CD8-positive, alpha-beta T cell (primary cell): ENCODE measurements at regions of chr13 and their contacts with region 1.

Region 1: GRCh38 chr13:49278211-49278610 is 30.5 kb downstream of the CDADC1 start:
- DNase-seq: no peak
- ATAC-seq: no peak
- H3K4me3 ChIP-seq: no peak overlapping the region
- H3K4me3 Mint-ChIP-seq: no peak overlapping the region
- H3K27ac ChIP-seq: no peak overlapping the region
- H3K27ac Mint-ChIP-seq: no peak overlapping the region
- H3K4me1 ChIP-seq: no peaks in the 10 kb centered on the region
- H3K4me1 Mint-ChIP-seq: no peaks in the 10 kb centered on the region
- H3K27me3 ChIP-seq: no peaks in the 10 kb centered on the region
- H3K27me3 Mint-ChIP-seq: no peaks in the 10 kb centered on the region
- CTCF ChIP-seq: no peak

Region 2: GRCh38 chr13:48595431-48596429 is 682.5 kb before region 1 on chr13:
- CTCF ChIA-PET with region 1: interaction called, 4 read pairs
- POLR2A ChIA-PET with region 1: no interaction called
- intact Hi-C with region 1: loop called in 1 of 2 experiments (anchors 5 kb)
- DNase-seq: peak; percentile 20 to 83 (median 48)
- ATAC-seq: peak; percentile 81
- H3K4me3 ChIP-seq: no peak overlapping the region
- H3K4me3 Mint-ChIP-seq: no peak overlapping the region
- H3K27ac ChIP-seq: no peak overlapping the region
- H3K27ac Mint-ChIP-seq: no peak overlapping the region
- H3K4me1 ChIP-seq: no peaks in the 10 kb centered on the region
- H3K4me1 Mint-ChIP-seq: no peaks in the 10 kb centered on the region
- H3K27me3 ChIP-seq: no peaks in the 10 kb centered on the region
- H3K27me3 Mint-ChIP-seq: no peaks in the 10 kb centered on the region
- CTCF ChIP-seq: peak; percentile 48

Region 3: GRCh38 chr13:49098771-49099512 is 179.3 kb before region 1 on chr13:
- CTCF ChIA-PET with region 1: interaction called, 3 read pairs
- POLR2A ChIA-PET with region 1: no interaction called
- intact Hi-C with region 1: loop called (anchors 1 to 2 kb)
- DNase-seq: peak in 2 of 9 experiments; percentile 11 to 43
- ATAC-seq: no peak
- H3K4me3 ChIP-seq: no peak overlapping the region
- H3K4me3 Mint-ChIP-seq: no peak overlapping the region
- H3K27ac ChIP-seq: no peak overlapping the region
- H3K27ac Mint-ChIP-seq: no peak overlapping the region
- H3K4me1 ChIP-seq: no peaks in the 10 kb centered on the region
- H3K4me1 Mint-ChIP-seq: peaks cover 8% of the 10 kb centered on the region
- H3K27me3 ChIP-seq: no peaks in the 10 kb centered on the region
- H3K27me3 Mint-ChIP-seq: no peaks in the 10 kb centered on the region
- CTCF ChIP-seq: no peak

Region 4: DNA sequence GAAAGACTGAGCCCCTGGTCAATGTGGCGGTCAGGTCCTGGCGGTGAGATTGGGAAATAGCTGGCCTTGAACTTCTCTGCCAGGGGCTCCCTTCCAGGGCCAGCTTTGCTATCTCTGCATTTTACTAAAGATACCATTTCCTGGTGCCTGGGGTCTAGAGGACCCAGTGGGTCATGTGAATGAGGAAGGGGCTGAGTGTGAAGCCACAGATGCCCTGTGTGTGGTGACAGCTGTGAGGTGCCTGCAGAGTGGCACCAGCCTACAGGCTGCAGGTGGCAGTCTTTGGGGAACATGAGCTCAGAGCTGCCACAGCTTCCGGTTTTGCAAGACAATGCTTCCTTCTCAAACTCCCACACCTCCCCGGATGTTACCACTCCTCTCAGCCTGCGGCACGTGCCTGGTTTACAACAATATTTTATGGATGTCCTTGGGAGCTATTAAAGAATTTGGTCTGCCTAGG is 63.3 kb before region 1 on chr13:
- CTCF ChIA-PET with region 1: interaction called, 6 read pairs
- POLR2A ChIA-PET with region 1: interaction called, 3 read pairs
- intact Hi-C with region 1: loop called in 1 of 2 experiments (anchors 2 kb)
- DNase-seq: peak in 8 of 9 experiments; percentile 11 to 68 (median 45)
- ATAC-seq: peak; percentile 89
- H3K4me3 ChIP-seq: no peak overlapping the region
- H3K4me3 Mint-ChIP-seq: no peak overlapping the region
- H3K27ac ChIP-seq: no peak overlapping the region
- H3K27ac Mint-ChIP-seq: no peak overlapping the region
- H3K4me1 ChIP-seq: peaks cover 8% of the 10 kb centered on the region
- H3K4me1 Mint-ChIP-seq: peaks cover 15% of the 10 kb centered on the region
- H3K27me3 ChIP-seq: peaks cover 15 to 19% of the 10 kb centered on the region in 2 experiments
- H3K27me3 Mint-ChIP-seq: peaks cover 32% of the 10 kb centered on the region
- CTCF ChIP-seq: peak; percentile 39

Region 5: DNA sequence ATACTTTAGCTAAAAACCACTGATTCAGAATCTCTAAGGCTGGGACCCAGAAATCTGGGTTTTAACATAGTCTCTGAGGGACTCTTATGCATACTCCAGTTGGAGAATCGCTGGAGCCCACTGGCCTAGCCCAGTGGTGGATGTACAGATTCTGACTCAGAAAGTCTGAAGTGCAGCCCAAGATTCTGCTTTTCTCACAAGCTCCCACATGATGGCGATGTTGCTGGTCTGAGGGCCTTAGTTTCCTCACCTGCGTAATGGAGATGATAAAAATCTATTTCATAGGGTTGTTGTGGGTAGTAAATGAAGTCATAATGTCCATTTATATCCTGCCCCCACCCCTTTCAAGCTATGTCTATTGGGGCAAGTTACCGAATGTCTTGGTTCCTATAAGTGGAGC is 38.2 kb before region 1 on chr13:
- CTCF ChIA-PET with region 1: interaction called, 28 read pairs
- POLR2A ChIA-PET with region 1: no interaction called
- intact Hi-C with region 1: loop called (anchors 1 kb)
- DNase-seq: peak in 6 of 9 experiments; percentile 16 to 65 (median 35)
- ATAC-seq: peak; percentile 74
- H3K4me3 ChIP-seq: no peak overlapping the region
- H3K4me3 Mint-ChIP-seq: no peak overlapping the region
- H3K27ac ChIP-seq: no peak overlapping the region
- H3K27ac Mint-ChIP-seq: no peak overlapping the region
- H3K4me1 ChIP-seq: no peaks in the 10 kb centered on the region
- H3K4me1 Mint-ChIP-seq: peaks cover 2% of the 10 kb centered on the region
- H3K27me3 ChIP-seq: no peaks in the 10 kb centered on the region
- H3K27me3 Mint-ChIP-seq: no peaks in the 10 kb centered on the region
- CTCF ChIP-seq: peak; percentile 43

Region 6: GRCh38 chr13:49247643-49248621 is 30.3 kb before region 1 on chr13 and contains the start of gene CDADC1:
- CTCF ChIA-PET with region 1: interaction called, 18 read pairs
- POLR2A ChIA-PET with region 1: no interaction called
- intact Hi-C with region 1: no loop called
- DNase-seq: peak; percentile 73 to 93 (median 87)
- ATAC-seq: peak; percentile 74
- H3K4me3 ChIP-seq: peak within 1 kb of the TSS; percentile 83 to 99
- H3K4me3 Mint-ChIP-seq: peak within 1 kb of the TSS; percentile 92
- H3K27ac ChIP-seq: peak within 1 kb of the TSS; percentile 80 to 93
- H3K27ac Mint-ChIP-seq: peak within 1 kb of the TSS; percentile 90
- H3K4me1 ChIP-seq: peaks cover 8% of the 10 kb centered on the region
- H3K4me1 Mint-ChIP-seq: peaks cover 54% of the 10 kb centered on the region
- H3K27me3 ChIP-seq: no peaks in the 10 kb centered on the region
- H3K27me3 Mint-ChIP-seq: no peaks in the 10 kb centered on the region
- CTCF ChIP-seq: no peak
- total RNA-seq, gene CDADC1: 15.9 to 17.2 TPM

Region 7: DNA sequence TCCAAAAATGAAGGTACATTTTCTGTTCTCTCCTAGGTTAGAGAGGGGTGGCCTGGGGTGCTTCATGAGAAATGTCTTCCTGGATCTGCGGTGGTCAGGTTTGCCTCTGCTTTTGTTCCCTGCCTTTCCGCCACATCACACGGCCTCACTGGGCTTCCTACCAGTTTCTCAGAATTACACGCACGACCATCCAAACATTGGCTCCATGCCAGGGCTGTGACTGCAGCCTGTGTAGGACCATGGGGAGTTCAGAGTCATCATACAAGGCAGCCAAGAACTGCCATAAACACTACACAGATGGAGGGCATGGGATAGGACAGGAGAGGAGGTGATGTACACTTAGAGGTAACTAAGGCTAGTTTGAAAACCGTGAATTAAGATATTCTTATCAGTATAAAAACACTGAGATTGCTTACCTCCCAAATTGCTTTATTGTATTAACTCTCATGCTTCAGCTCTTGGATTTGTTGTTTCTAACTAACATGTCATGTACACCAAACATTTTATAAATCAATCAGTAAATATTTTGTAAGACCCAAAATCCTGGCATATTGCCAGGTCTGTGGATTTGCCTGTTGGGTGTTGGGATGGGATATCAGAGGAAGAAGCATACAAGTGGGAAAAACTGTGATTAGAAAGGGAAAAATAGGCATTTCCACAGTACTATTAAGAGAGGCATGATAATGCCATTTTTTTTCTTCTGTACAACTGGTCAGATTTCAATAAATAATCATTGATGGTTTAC is 14.7 kb after region 1 on chr13:
- CTCF ChIA-PET with region 1: interaction called, 17 read pairs
- POLR2A ChIA-PET with region 1: no interaction called
- intact Hi-C with region 1: no loop called
- DNase-seq: no peak
- ATAC-seq: no peak
- H3K4me3 ChIP-seq: no peak overlapping the region
- H3K4me3 Mint-ChIP-seq: no peak overlapping the region
- H3K27ac ChIP-seq: no peak overlapping the region
- H3K27ac Mint-ChIP-seq: peak overlapping the region; percentile 72
- H3K4me1 ChIP-seq: no peaks in the 10 kb centered on the region
- H3K4me1 Mint-ChIP-seq: peaks cover 9% of the 10 kb centered on the region
- H3K27me3 ChIP-seq: no peaks in the 10 kb centered on the region
- H3K27me3 Mint-ChIP-seq: no peaks in the 10 kb centered on the region
- CTCF ChIP-seq: no peak

Region 8: GRCh38 chr13:49571299-49572240 is 293.4 kb after region 1 on chr13:
- CTCF ChIA-PET with region 1: no interaction called
- POLR2A ChIA-PET with region 1: no interaction called
- intact Hi-C with region 1: no loop called
- DNase-seq: no peak
- ATAC-seq: no peak
- H3K4me3 ChIP-seq: no peak overlapping the region
- H3K4me3 Mint-ChIP-seq: no peak overlapping the region
- H3K27ac ChIP-seq: no peak overlapping the region
- H3K27ac Mint-ChIP-seq: peak overlapping the region; percentile 0
- H3K4me1 ChIP-seq: peaks cover 3% of the 10 kb centered on the region
- H3K4me1 Mint-ChIP-seq: peaks cover 22% of the 10 kb centered on the region
- H3K27me3 ChIP-seq: no peaks in the 10 kb centered on the region
- H3K27me3 Mint-ChIP-seq: no peaks in the 10 kb centered on the region
- CTCF ChIP-seq: no peak